Activated CD4-positive, alpha-beta T cell treated with anti-CD3 and anti-CD28 coated beads for 36 hours (primary cell): ENCODE measurements at regions of chr3 and their contacts with region 1.

Region 1: DNA sequence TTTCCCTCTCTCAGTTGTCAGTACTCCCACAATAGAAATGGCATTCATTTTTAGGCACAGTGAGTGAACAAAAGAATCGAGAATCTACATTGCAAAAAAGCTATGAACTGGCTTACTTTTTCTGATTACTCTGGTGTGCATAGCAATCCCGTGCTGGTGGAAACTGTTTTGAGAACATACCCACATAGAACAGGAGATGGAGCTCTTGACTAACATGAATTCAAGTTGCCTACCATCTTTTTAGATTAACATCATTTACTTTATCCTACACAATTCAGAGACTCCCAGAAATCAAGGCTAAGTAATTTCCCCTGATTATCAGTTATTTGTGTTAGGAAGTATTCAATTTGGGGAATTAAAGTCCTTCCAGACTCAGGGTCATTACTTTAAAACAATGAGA is 326.6 kb downstream of the ARPP21 start:
- DNase-seq: no peak
- ATAC-seq: no peak
- H3K4me3 Mint-ChIP-seq: no peak overlapping the region
- H3K27ac Mint-ChIP-seq: no peak overlapping the region
- H3K4me1 Mint-ChIP-seq: peaks cover 2% of the 10 kb centered on the region
- H3K27me3 Mint-ChIP-seq: peaks cover 2% of the 10 kb centered on the region

Region 2: DNA sequence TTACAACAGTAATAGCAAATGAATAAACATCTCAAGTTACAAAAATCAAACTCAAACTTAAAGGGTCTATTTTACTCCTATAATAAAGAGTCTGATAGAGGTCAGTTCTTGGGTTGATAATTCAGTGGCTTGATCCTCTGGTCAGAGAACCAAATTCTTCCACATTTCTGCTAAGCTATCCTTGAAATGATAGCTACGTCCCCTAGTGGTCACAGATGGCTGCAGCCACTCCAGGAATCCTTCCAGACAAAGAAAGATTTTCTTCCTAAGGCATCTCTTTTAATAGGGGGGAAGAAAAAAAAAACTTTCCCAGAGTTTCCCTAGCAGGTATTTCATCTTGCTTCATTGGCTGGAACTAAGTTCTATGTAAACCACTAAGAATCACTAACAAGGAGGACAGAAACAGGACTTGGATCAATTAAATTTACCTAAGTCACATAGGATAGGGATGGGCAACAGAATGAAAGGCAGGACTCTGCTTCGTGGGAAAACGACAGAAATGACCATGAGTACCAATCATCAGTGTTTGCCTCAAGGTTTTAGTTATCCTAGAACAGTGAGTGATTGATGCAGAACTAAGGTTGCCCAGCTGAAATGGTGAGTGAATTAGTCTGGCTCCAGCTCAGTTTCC is 575.1 kb after region 1 on chr3:
- CTCF ChIA-PET with region 1: no interaction called
- POLR2A ChIA-PET with region 1: no interaction called
- intact Hi-C with region 1: loop called in 1 of 2 experiments (anchors 5 kb)
- DNase-seq: no peak
- ATAC-seq: no peak
- H3K4me3 Mint-ChIP-seq: no peak overlapping the region
- H3K27ac Mint-ChIP-seq: no peak overlapping the region
- H3K4me1 Mint-ChIP-seq: peaks cover 1% of the 10 kb centered on the region
- H3K27me3 Mint-ChIP-seq: peaks cover 6% of the 10 kb centered on the region